Tibial artery (tissue), 4 donors: ENCODE measurements at regions of chr16 and their contacts with region 1.

Region 1: GRCh38 chr16:23232806-23233205 is 50.3 kb downstream of the SCNN1G start:
- DNase-seq: no peak
- H3K4me3 ChIP-seq: no peak overlapping the region
- H3K27ac ChIP-seq: no peak overlapping the region
- H3K4me1 ChIP-seq: no peaks in the 10 kb centered on the region
- H3K27me3 ChIP-seq: peaks cover 0 to 6% of the 10 kb centered on the region in 2 donors
- CTCF ChIP-seq: no peak

Region 2: GRCh38 chr16:22659933-22660332 is 572.9 kb before region 1 on chr16:
- intact Hi-C with region 1: loop called (anchors 5 kb)
- DNase-seq: no peak
- H3K4me3 ChIP-seq: no peak overlapping the region
- H3K27ac ChIP-seq: no peak overlapping the region
- H3K4me1 ChIP-seq: no peaks in the 10 kb centered on the region
- H3K27me3 ChIP-seq: peaks cover 0 to 19% of the 10 kb centered on the region in 2 donors
- CTCF ChIP-seq: no peak